ENCODE measurements at regions of chr12 and their contacts with region 1.

Region 1: GRCh38 chr12:28110329-28110728 is 79.9 kb upstream of the CCDC91 start:
- DNase-seq: no peak
- H3K4me3 ChIP-seq: no peak overlapping the region
- H3K27ac ChIP-seq: no peak overlapping the region
- H3K4me1 ChIP-seq: peaks cover 23% of the 10 kb centered on the region
- H3K27me3 ChIP-seq: no peaks in the 10 kb centered on the region
- CTCF ChIP-seq: no peak

Region 2: GRCh38 chr12:28172434-28173030 is 62.2 kb after region 1 on chr12:
- CTCF ChIA-PET with region 1: no interaction called
- dilution Hi-C with region 1: no loop called
- in situ Hi-C with region 1: no loop called
- intact Hi-C with region 1: loop called (anchors 5 kb)
- DNase-seq: peak; percentile 63
- H3K4me3 ChIP-seq: no peak overlapping the region
- H3K27ac ChIP-seq: peak overlapping the region; percentile 23
- H3K4me1 ChIP-seq: peaks cover 12% of the 10 kb centered on the region
- H3K27me3 ChIP-seq: no peaks in the 10 kb centered on the region
- CTCF ChIP-seq: peak; percentile 80 to 85

Measured in mammary epithelial cell (primary cell).